Psoas muscle (tissue), 8 donors: ENCODE measurements at regions of chr3 and their contacts with region 1.

Region 1: GRCh38 chr3:177705976-177706823 is 508.9 kb upstream of the TBL1XR1 start:
- DNase-seq: peak; percentile 51 to 70
- ATAC-seq: peak in 3 of 4 donors; percentile 51 to 82 (median 62)
- H3K4me3 ChIP-seq: no peak overlapping the region
- H3K27ac ChIP-seq: no peak overlapping the region
- H3K4me1 ChIP-seq: peaks cover 10% of the 10 kb centered on the region
- H3K27me3 ChIP-seq: no peaks in the 10 kb centered on the region
- CTCF ChIP-seq: no peak

Region 2: DNA sequence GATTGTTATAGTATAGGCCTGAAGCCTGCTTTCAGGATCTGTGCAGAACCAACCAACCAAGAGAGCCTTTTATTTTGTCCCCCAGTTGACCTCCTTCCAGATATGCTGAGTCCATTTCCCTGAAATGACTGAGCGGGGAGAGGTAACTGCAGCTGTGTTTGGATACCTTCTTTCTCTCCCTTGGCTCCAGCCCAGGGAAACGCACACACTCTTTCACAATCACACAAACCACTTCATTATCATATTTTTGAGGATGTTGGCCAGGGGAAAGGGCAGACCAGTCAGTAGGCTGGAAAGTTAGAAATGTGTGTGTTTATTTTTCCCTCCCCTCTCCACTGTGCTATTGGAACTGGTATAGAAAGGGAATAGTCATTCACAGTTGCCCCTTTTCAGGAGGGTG is 91.2 kb before region 1 on chr3:
- intact Hi-C with region 1: loop called in 1 of 2 experiments (anchors 10 kb)
- DNase-seq: peak; percentile 72 to 81
- ATAC-seq: peak; percentile 40 to 80 (median 65)
- H3K4me3 ChIP-seq: no peak overlapping the region
- H3K27ac ChIP-seq: no peak overlapping the region
- H3K4me1 ChIP-seq: peaks cover 5% of the 10 kb centered on the region
- H3K27me3 ChIP-seq: no peaks in the 10 kb centered on the region
- CTCF ChIP-seq: no peak